AG04450 (cell line): ENCODE measurements at regions of chr1 and their contacts with region 1.

Region 1: DNA sequence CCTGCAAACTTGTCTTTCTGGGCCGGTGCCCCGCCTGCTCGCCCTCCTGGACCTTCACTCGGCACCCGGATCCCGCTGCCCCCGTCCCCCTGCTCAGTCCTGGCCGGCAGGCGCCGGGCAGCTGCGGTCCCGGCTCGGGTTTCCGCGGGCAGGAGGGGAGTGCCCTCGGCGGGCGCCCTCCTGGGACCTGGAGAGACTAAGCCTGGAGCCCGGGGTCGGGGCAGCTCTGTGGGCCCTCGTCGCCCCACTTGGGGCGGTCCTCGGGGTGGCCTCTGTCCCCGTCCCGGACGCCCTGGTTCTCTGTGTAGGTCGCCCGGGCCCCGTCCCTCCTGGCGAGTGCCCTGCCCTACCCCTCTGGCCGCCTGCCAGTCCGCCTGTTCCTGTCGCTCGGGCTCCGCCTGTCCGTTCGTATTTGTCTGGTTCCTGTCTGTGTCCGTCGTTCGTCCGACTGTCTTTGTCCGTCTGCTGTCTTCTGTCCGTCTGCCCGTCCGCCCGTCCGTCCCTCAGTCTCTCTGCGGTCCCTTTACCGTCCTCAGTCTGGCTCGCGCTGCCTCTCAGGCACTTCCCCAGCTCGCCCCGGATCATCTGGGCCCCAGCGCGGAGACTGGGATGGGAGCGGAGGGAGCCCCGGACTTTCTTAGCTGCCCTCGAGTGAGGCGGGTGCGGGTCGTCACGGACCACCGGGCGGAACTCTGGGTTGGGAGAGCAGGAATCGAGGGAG is 552 bp downstream of the SERINC2 start:
- DNase-seq: no peak
- H3K4me3 ChIP-seq: peak overlapping the region; percentile 85
- H3K27ac ChIP-seq: no peak overlapping the region
- H3K27me3 ChIP-seq: no peaks in the 10 kb centered on the region
- CTCF ChIP-seq: no peak

Region 2: GRCh38 chr1:31306278-31306677 is 107.3 kb before region 1 on chr1:
- CTCF ChIA-PET with region 1: no interaction called
- POLR2A ChIA-PET with region 1: interaction called, 11 read pairs
- DNase-seq: peak; percentile 92
- H3K4me3 ChIP-seq: no peak overlapping the region
- H3K27ac ChIP-seq: peak overlapping the region; percentile 83
- H3K27me3 ChIP-seq: no peaks in the 10 kb centered on the region
- CTCF ChIP-seq: no peak